OCI-LY7 (cell line): ENCODE measurements at regions of chr19 and their contacts with region 1.

Region 1: GRCh38 chr19:14582894-14583340 is at the start of gene CLEC17A:
- DNase-seq: peak; percentile 96
- H3K4me3 ChIP-seq: peak within 1 kb of the TSS; percentile 74
- H3K27ac ChIP-seq: peak within 1 kb of the TSS; percentile 68
- H3K4me1 ChIP-seq: peaks cover 67% of the 10 kb centered on the region
- CTCF ChIP-seq: no peak
- total RNA-seq, gene CLEC17A: 45.7 and 51.1 TPM in 2 replicates

Region 2: GRCh38 chr19:14603990-14604387 is 21.1 kb after region 1 on chr19:
- CTCF ChIA-PET with region 1: no interaction called
- POLR2A ChIA-PET with region 1: interaction called, 9 read pairs
- intact Hi-C with region 1: loop called (anchors 1 kb)
- DNase-seq: peak; percentile 94
- H3K4me3 ChIP-seq: peak overlapping the region; percentile 46
- H3K27ac ChIP-seq: peak overlapping the region; percentile 96
- H3K4me1 ChIP-seq: peaks cover 44% of the 10 kb centered on the region
- CTCF ChIP-seq: no peak

Region 3: DNA sequence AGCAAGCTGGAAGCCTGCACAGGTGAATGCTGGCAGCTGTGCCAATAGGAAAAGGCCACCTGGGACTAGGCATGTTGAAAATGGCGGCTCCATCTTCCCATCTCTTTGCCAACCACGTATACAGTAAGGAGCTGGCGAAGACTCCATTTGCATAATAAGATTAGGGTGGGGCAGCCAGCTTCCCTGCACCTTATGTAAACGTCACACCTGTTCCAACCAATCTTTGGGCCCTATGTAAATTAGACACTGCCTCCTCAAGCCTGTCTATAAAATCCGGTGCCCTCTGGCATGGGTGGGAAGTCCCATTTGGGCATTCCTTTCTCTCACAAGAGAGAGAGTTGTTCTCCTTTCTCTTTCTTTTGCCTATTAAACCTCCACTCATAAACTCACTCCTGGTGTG is 178.7 kb after region 1 on chr19:
- CTCF ChIA-PET with region 1: no interaction called
- POLR2A ChIA-PET with region 1: no interaction called
- intact Hi-C with region 1: no loop called
- DNase-seq: no peak
- H3K4me3 ChIP-seq: no peak overlapping the region
- H3K27ac ChIP-seq: no peak overlapping the region
- H3K4me1 ChIP-seq: no peaks in the 10 kb centered on the region
- CTCF ChIP-seq: no peak